GM12878 (cell line): ENCODE measurements at regions of chr5 and their contacts with region 1.

Region 1: DNA sequence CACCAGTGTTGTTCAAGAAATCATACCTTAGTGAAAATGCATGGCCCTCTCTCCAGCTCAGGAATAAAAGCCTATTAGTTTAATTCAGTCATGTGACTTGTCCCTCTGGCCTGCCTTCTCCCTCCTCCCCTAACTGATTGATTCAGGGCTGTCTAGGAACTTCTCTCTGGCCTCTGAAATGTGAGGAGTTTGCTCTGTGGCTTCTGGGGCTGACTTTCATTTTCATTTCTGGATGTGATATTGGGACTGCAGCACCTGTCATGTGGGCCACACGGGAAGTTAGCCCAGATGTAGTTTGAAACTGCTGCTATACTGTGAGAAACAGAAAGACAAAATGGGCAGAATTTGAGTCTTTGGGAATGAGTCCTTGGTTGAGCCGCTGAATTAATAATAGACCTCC is 44.8 kb downstream of the PARP8 start:
- DNase-seq: peak; percentile 87
- ATAC-seq: peak; percentile 95
- H3K4me3 ChIP-seq: peak overlapping the region; percentile 37
- H3K27ac ChIP-seq: peak overlapping the region; percentile 70
- H3K4me1 ChIP-seq: peaks cover 20% of the 10 kb centered on the region
- H3K27me3 ChIP-seq: no peaks in the 10 kb centered on the region
- CTCF ChIP-seq: no peak
- EP300 ChIP-seq: no peak; a peak in 1 of 4 replicates
- POLR2A ChIP-seq: no peak
- RAD21 ChIP-seq: no peak

Region 2: DNA sequence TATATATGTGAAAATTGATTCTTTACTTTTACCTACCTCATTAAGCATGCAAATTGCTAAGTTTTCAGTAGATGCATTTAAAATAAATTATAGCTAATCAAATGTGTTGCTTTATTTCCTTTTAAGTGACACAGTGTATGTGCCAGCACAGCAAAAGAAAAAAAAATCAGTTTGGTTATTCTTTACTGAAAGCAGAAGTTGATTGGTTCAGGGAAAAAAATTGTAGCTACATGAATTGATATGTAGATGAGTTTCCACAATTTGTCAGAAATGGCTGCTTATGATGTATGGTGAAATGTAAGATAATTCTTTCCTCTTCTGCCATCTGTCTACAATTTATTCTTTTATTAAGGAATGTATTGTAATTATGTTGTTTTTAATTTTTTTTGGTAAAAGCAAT is 13.0 kb after region 1 on chr5:
- CTCF ChIA-PET with region 1: interaction called, 5 read pairs
- POLR2A ChIA-PET with region 1: interaction called, 3 read pairs
- RAD21 ChIA-PET with region 1: interaction called, 3 read pairs
- SMC1A ChIA-PET with region 1: interaction called, 14 read pairs
- in situ Hi-C with region 1: no loop called
- intact Hi-C with region 1: no loop called
- DNase-seq: no peak
- ATAC-seq: no peak
- H3K4me3 ChIP-seq: no peak overlapping the region
- H3K27ac ChIP-seq: no peak overlapping the region
- H3K4me1 ChIP-seq: no peaks in the 10 kb centered on the region
- H3K27me3 ChIP-seq: no peaks in the 10 kb centered on the region
- CTCF ChIP-seq: no peak
- EP300 ChIP-seq: no peak
- POLR2A ChIP-seq: no peak
- RAD21 ChIP-seq: no peak